HCT116 (cell line): ENCODE measurements at regions of chr2 and their contacts with region 1.

Region 1: GRCh38 chr2:171922230-171923022 is at the start of gene HAT1:
- DNase-seq: peak; percentile 95
- ATAC-seq: peak; percentile 92
- H3K4me3 ChIP-seq: peak within 1 kb of the TSS; percentile 80 to 85
- H3K27ac ChIP-seq: peak within 1 kb of the TSS; percentile 59
- H3K4me1 ChIP-seq: peaks cover 6 to 13% of the 10 kb centered on the region in 2 experiments; a peak in 3 of 4 replicates
- H3K27me3 ChIP-seq: no peaks in the 10 kb centered on the region
- CTCF ChIP-seq: no peak
- POLR2A ChIP-seq: peak; percentile 32
- RAD21 ChIP-seq: no peak
- total RNA-seq, gene HAT1: 72.6 TPM

Region 2: GRCh38 chr2:171893824-171894611 is 28.4 kb before region 1 on chr2 and contains the start of gene SLC25A12:
- CTCF ChIA-PET with region 1: no interaction called
- POLR2A ChIA-PET with region 1: interaction called, 7 read pairs
- RAD21 ChIA-PET with region 1: no interaction called
- intact Hi-C with region 1: loop called (anchors 1 kb)
- DNase-seq: peak; percentile 45
- ATAC-seq: peak; percentile 96
- H3K4me3 ChIP-seq: peak within 1 kb of the TSS; percentile 95 to 100
- H3K27ac ChIP-seq: peak within 1 kb of the TSS; percentile 43
- H3K4me1 ChIP-seq: peaks cover 8 to 17% of the 10 kb centered on the region in 2 experiments; a peak in 3 of 4 replicates
- H3K27me3 ChIP-seq: no peaks in the 10 kb centered on the region
- CTCF ChIP-seq: no peak
- POLR2A ChIP-seq: peak; percentile 41
- RAD21 ChIP-seq: no peak
- total RNA-seq, gene SLC25A12: 16.0 TPM

Region 3: DNA sequence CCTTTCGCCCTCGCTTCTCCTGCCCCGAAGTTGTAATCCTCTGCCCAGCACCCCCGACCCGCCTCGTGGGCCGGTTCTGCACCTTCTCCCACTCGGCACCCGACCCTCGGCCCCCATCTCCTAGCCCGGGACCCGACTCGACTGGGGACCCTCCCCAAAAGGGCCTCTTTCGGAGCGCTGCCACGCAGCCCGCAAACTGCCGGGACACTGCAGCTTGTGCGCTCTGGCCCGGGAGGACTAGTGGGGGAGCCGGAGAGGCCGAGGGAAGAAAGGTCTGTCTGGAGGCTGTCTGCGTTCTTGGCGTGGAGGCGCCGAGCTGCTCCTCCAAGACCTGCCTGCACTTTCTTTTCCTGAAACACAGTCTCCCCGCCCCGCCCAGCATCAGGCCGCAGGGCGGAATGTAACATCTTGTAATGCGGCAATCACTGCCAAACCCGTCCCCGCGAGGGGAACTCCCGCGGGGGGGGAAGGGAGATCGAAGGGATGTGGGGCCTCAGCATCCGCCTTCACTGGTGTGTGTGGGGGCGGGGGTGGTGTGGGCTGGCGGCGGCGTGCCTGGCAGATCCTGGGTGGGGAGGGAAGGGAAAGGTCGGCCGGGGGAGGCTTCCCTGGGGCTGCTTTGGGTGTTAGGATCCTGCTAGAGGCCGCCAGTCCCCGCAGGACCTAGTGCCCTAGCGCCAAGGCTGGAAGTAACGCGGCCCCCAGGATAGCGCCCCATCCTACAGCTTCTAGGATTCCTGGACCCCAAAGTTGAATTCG is 172.9 kb after region 1 on chr2:
- CTCF ChIA-PET with region 1: no interaction called
- POLR2A ChIA-PET with region 1: no interaction called
- RAD21 ChIA-PET with region 1: no interaction called
- intact Hi-C with region 1: loop called (anchors 10 kb)
- DNase-seq: no peak
- ATAC-seq: peak; percentile 43
- H3K4me3 ChIP-seq: peak overlapping the region; percentile 73 to 79
- H3K27ac ChIP-seq: peak overlapping the region; percentile 86
- H3K4me1 ChIP-seq: peaks cover 37 to 57% of the 10 kb centered on the region in 2 experiments
- H3K27me3 ChIP-seq: no peaks in the 10 kb centered on the region
- CTCF ChIP-seq: no peak
- POLR2A ChIP-seq: no peak
- RAD21 ChIP-seq: no peak